ENCODE measurements at regions of chr5 and their contacts with region 1.

Region 1: GRCh38 chr5:36305571-36306326 is 4.0 kb upstream of the RANBP3L start:
- DNase-seq: peak; percentile 36 to 72
- H3K4me3 ChIP-seq: no peak overlapping the region
- H3K27ac ChIP-seq: peak overlapping the region in 1 of 2 donors; percentile 77
- H3K4me1 ChIP-seq: peaks cover 0 to 42% (median 9%) of the 10 kb centered on the region in 4 donors
- H3K27me3 ChIP-seq: no peaks in the 10 kb centered on the region
- CTCF ChIP-seq: peak; percentile 72 to 81

Region 2: GRCh38 chr5:35990941-35991611 is 314.7 kb before region 1 on chr5 and contains the start of gene UGT3A1:
- intact Hi-C with region 1: no loop called
- DNase-seq: no peak
- H3K4me3 ChIP-seq: no peak within 1 kb of the TSS
- H3K27ac ChIP-seq: no peak within 1 kb of the TSS
- H3K4me1 ChIP-seq: no peaks in the 10 kb centered on the region
- H3K27me3 ChIP-seq: no peaks in the 10 kb centered on the region
- CTCF ChIP-seq: no peak

Region 3: DNA sequence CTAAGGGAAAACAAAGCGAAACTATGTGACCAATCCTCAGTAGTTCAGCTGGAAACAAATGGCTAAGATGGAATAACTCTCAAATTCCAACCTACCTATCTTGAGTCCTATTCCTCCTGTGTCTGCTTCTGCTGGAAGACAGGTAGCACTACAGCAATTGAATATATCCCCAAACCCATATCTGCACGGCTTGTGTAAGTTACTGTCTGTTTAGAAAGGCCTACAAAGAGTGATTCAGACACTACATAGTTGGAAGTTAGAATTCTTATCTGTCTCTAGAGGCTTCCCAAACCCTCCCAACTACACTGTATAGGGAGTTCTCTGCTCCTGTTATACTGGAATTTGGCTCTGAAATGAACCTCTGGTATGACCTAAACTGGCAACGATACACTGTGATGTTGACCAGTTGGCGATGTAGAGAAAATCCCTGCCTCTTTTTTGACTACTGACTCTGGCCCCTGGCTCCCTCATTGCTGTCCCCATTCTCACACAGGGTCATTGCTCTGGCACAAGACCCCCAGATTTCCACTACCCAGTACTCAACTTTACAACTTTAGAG is 41.5 kb before region 1 on chr5:
- intact Hi-C with region 1: loop called (anchors 2 kb)
- DNase-seq: no peak
- H3K4me3 ChIP-seq: no peak overlapping the region
- H3K27ac ChIP-seq: no peak overlapping the region
- H3K4me1 ChIP-seq: peaks cover 0 to 2% (median 0%) of the 10 kb centered on the region in 4 donors
- H3K27me3 ChIP-seq: no peaks in the 10 kb centered on the region
- CTCF ChIP-seq: no peak